Mammary epithelial cell (primary cell): ENCODE measurements at regions of chr3 and their contacts with region 1.

Region 1: GRCh38 chr3:11134794-11135193 is 19.5 kb upstream of the HRH1 start:
- DNase-seq: peak; percentile 25
- H3K4me3 ChIP-seq: no peak overlapping the region
- H3K27ac ChIP-seq: no peak overlapping the region
- H3K4me1 ChIP-seq: peaks cover 17% of the 10 kb centered on the region
- H3K27me3 ChIP-seq: no peaks in the 10 kb centered on the region
- CTCF ChIP-seq: no peak

Region 2: DNA sequence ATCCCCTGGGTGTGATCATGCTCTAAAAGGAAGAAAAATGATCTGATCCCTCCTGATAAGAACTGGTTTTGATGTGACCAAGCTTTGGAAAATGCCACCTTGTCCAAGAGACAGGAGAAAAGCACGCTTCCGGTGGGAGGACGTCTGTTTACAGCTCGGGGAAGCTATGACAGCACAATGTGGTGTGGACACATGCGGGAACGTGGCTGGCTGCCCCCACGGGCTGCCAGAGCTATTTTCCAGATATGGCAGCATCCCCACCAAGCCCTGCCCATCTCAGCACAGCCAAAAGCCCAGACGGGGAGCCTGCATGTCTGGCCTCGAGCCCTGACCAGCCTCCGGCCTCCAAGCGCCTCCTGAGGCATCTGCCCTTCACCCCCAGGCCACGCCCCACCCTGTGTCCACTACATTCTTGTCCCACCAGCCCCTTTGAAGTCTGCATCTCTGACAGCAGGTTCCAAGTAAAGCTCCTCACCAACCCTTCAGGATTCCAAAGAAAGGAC is 43.7 kb before region 1 on chr3:
- CTCF ChIA-PET with region 1: no interaction called
- dilution Hi-C with region 1: loop called (anchors 5 kb)
- in situ Hi-C with region 1: no loop called
- intact Hi-C with region 1: loop called (anchors 2 kb)
- DNase-seq: no peak
- H3K4me3 ChIP-seq: no peak overlapping the region
- H3K27ac ChIP-seq: no peak overlapping the region
- H3K4me1 ChIP-seq: peaks cover 7% of the 10 kb centered on the region
- H3K27me3 ChIP-seq: no peaks in the 10 kb centered on the region
- CTCF ChIP-seq: no peak

Region 3: DNA sequence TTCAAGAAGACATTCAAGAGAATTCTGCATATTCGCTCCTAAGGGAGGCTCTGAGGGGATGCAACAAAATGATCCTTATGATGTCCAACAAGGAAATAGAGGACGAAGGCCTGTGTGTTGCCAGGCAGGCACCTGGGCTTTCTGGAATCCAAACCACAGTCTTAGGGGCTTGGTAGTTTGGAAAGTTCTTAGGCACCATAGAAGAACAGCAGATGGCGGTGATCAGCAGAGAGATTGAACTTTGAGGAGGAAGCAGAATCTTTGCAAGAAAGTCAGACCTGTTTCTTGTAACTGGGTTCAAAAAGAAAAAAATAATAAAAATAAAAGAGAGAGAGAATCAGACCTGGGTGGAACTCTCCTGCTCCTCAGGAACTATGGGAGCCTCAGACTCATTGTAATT is 125.7 kb after region 1 on chr3:
- CTCF ChIA-PET with region 1: no interaction called
- dilution Hi-C with region 1: no loop called
- in situ Hi-C with region 1: no loop called
- intact Hi-C with region 1: no loop called
- DNase-seq: no peak
- H3K4me3 ChIP-seq: no peak overlapping the region
- H3K27ac ChIP-seq: no peak overlapping the region
- H3K4me1 ChIP-seq: no peaks in the 10 kb centered on the region
- H3K27me3 ChIP-seq: no peaks in the 10 kb centered on the region
- CTCF ChIP-seq: no peak